ENCODE measurements at regions of chr7 and their contacts with region 1.

Region 1: DNA sequence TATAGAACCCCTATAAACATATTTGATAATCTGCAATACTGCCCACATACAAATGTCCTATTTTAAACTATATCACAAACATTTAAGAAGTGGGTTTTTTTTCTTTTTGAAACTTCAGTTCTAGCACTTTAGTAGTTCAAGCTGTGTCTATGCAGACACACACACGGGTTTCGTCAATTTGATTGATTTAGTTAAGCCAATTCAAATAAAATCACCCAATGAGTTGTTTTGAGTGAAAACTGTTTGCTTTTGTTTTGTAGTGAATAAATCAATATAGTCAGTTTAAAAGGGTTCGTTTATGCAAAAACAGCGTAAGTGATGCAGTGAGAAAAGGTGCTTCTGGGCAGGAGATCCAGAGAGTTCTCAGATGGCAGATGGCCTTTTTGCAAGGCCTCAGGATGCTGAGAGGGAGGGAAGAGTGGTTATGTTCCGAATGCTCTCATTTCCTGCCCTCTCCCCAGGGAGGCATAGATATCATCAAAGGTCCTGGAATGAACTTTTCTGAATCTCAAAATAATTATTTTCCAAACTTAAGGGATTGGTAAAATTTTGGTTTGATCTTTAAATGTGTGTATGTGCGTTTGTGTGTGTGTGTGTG is 102.7 kb downstream of the AGMO start:
- DNase-seq: no peak
- H3K4me3 Mint-ChIP-seq: no peak overlapping the region
- H3K27ac Mint-ChIP-seq: no peak overlapping the region
- H3K4me1 Mint-ChIP-seq: no peaks in the 10 kb centered on the region
- H3K27me3 Mint-ChIP-seq: no peaks in the 10 kb centered on the region

Region 2: GRCh38 chr7:15291702-15292101 is 167.4 kb before region 1 on chr7:
- intact Hi-C with region 1: no loop called
- DNase-seq: no peak
- H3K4me3 Mint-ChIP-seq: no peak overlapping the region
- H3K27ac Mint-ChIP-seq: no peak overlapping the region
- H3K4me1 Mint-ChIP-seq: no peaks in the 10 kb centered on the region
- H3K27me3 Mint-ChIP-seq: no peaks in the 10 kb centered on the region

Region 3: DNA sequence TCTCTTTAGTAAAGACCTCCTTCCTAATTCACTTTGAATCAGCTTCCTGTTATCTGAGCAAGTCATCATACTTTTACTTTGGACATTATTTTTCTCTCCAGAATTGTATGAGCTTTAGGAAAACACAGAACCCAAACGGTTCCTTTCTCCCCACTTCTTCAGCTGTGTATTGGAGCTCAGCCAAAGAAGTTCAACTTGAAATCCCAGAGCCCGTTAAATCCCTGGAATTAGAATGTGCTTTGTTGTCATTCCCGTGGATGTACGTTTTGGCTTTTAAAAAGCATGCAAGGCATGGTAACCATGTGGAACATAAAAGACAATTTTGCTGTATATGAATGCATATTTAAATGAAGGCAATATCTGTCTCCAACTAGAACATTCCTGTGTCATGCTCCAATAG is 56.1 kb after region 1 on chr7:
- intact Hi-C with region 1: loop called (anchors 10 kb)
- DNase-seq: no peak
- H3K4me3 Mint-ChIP-seq: no peak overlapping the region
- H3K27ac Mint-ChIP-seq: no peak overlapping the region
- H3K4me1 Mint-ChIP-seq: no peaks in the 10 kb centered on the region
- H3K27me3 Mint-ChIP-seq: no peaks in the 10 kb centered on the region